A673 (cell line): ENCODE measurements at regions of chr2 and their contacts with region 1.

Region 1: GRCh38 chr2:230614913-230615332 is 97.7 kb upstream of the CAB39 start:
- DNase-seq: no peak
- H3K4me3 ChIP-seq: no peak overlapping the region
- H3K27ac ChIP-seq: no peak overlapping the region
- H3K4me1 ChIP-seq: no peaks in the 10 kb centered on the region
- H3K27me3 ChIP-seq: no peaks in the 10 kb centered on the region
- CTCF ChIP-seq: no peak

Region 2: DNA sequence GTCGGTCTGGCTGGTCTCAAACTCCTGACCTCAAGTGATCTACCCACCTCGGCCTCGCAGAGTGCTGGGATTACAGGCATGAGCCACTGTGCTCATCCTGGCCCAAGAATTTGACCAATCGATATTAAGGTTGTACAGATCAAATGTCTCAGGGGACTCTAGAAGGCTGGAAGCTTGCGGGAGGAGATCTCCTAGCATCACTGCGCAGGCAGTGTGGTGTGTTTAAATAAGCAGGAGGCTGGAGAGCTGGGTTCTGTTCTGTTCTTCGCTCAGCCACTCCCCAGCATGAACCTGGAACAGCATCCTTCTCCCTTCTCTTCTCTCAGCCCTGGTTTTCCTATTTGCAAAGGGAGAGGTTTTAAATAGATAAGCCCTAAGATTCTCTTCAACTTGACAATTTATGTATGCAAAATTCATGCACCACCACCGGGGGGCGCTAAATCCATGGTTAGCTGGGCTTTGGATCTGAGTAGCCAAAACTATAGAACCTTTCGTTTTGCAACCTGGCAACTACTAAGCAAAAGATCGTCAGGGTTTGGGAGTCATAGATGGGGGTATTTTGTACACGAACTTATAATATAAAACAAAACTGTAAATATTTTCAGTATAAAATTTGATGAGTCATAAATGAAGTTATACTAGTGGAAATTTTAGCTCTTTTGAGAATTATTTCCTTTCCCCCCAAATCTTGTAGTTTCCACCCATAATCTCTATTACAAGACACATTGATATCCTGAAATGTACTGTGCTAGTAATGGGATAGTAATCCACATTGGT is 606.8 kb before region 1 on chr2:
- CTCF ChIA-PET with region 1: no interaction called
- POLR2A ChIA-PET with region 1: no interaction called
- intact Hi-C with region 1: loop called (anchors 2 kb)
- DNase-seq: peak; percentile 78
- H3K4me3 ChIP-seq: no peak overlapping the region
- H3K27ac ChIP-seq: no peak overlapping the region
- H3K4me1 ChIP-seq: no peaks in the 10 kb centered on the region
- H3K27me3 ChIP-seq: no peaks in the 10 kb centered on the region
- CTCF ChIP-seq: peak; percentile 86

Region 3: GRCh38 chr2:230330725-230331124 is 284.2 kb before region 1 on chr2:
- CTCF ChIA-PET with region 1: no interaction called
- POLR2A ChIA-PET with region 1: no interaction called
- intact Hi-C with region 1: no loop called
- DNase-seq: no peak
- H3K4me3 ChIP-seq: no peak overlapping the region
- H3K27ac ChIP-seq: no peak overlapping the region
- H3K4me1 ChIP-seq: no peaks in the 10 kb centered on the region
- H3K27me3 ChIP-seq: no peaks in the 10 kb centered on the region
- CTCF ChIP-seq: no peak